T-cell (primary cell): ENCODE measurements at regions of chr4 and their contacts with region 1.

Region 1: GRCh38 chr4:15457406-15458201 is 12.1 kb upstream of the CC2D2A start:
- DNase-seq: peak in 2 of 35 experiments; percentile 6 to 62
- ATAC-seq: peak in 3 of 4 experiments; percentile 62 to 74 (median 68)
- H3K4me3 ChIP-seq: no peak overlapping the region
- H3K4me3 Mint-ChIP-seq: no peak overlapping the region
- H3K27ac ChIP-seq: no peak overlapping the region
- H3K27ac Mint-ChIP-seq: no peak overlapping the region
- H3K4me1 ChIP-seq: peaks cover 0 to 3% of the 10 kb centered on the region in 2 experiments
- H3K4me1 Mint-ChIP-seq: peaks cover 2 to 14% (median 10%) of the 10 kb centered on the region in 3 donors
- H3K27me3 ChIP-seq: no peaks in the 10 kb centered on the region
- H3K27me3 Mint-ChIP-seq: peaks cover 0 to 3% of the 10 kb centered on the region in 2 donors

Region 2: GRCh38 chr4:14896656-14897175 is 560.9 kb before region 1 on chr4:
- CTCF ChIA-PET with region 1: interaction called in 1 of 2 experiments, 12 read pairs
- POLR2A ChIA-PET with region 1: no interaction called
- DNase-seq: no peak
- ATAC-seq: no peak
- H3K4me3 ChIP-seq: no peak overlapping the region
- H3K4me3 Mint-ChIP-seq: no peak overlapping the region
- H3K27ac ChIP-seq: no peak overlapping the region
- H3K27ac Mint-ChIP-seq: no peak overlapping the region
- H3K4me1 ChIP-seq: no peaks in the 10 kb centered on the region
- H3K4me1 Mint-ChIP-seq: no peaks in the 10 kb centered on the region
- H3K27me3 ChIP-seq: no peaks in the 10 kb centered on the region
- H3K27me3 Mint-ChIP-seq: peaks cover 0 to 7% of the 10 kb centered on the region in 2 donors

Region 3: GRCh38 chr4:15231265-15232091 is 226.1 kb before region 1 on chr4:
- CTCF ChIA-PET with region 1: interaction called, 11 to 33 read pairs
- POLR2A ChIA-PET with region 1: interaction called in 1 of 2 experiments, 3 read pairs
- DNase-seq: peak; percentile 23 to 84 (median 59)
- ATAC-seq: peak; percentile 77 to 85 (median 82)
- H3K4me3 ChIP-seq: no peak overlapping the region
- H3K4me3 Mint-ChIP-seq: no peak overlapping the region
- H3K27ac ChIP-seq: no peak overlapping the region
- H3K27ac Mint-ChIP-seq: no peak overlapping the region
- H3K4me1 ChIP-seq: peaks cover 12 to 20% of the 10 kb centered on the region in 2 experiments
- H3K4me1 Mint-ChIP-seq: peaks cover 30 to 32% (median 32%) of the 10 kb centered on the region in 3 donors
- H3K27me3 ChIP-seq: no peaks in the 10 kb centered on the region
- H3K27me3 Mint-ChIP-seq: no peaks in the 10 kb centered on the region

Region 4: GRCh38 chr4:15470128-15470475 is 12.5 kb after region 1 on chr4:
- CTCF ChIA-PET with region 1: interaction called, 7 to 11 read pairs
- POLR2A ChIA-PET with region 1: interaction called in 1 of 2 experiments, 3 read pairs
- DNase-seq: no peak
- ATAC-seq: no peak
- H3K4me3 ChIP-seq: peak overlapping the region in 1 of 2 donors; percentile 64
- H3K4me3 Mint-ChIP-seq: peak overlapping the region; percentile 43 to 69 (median 60)
- H3K27ac ChIP-seq: no peak overlapping the region
- H3K27ac Mint-ChIP-seq: no peak overlapping the region
- H3K4me1 ChIP-seq: peaks cover 0 to 8% of the 10 kb centered on the region in 2 experiments
- H3K4me1 Mint-ChIP-seq: peaks cover 17 to 18% (median 17%) of the 10 kb centered on the region in 3 donors
- H3K27me3 ChIP-seq: peaks cover 0 to 4% of the 10 kb centered on the region in 2 experiments
- H3K27me3 Mint-ChIP-seq: peaks cover 6 to 8% of the 10 kb centered on the region in 2 donors